PC-3 (cell line): ENCODE measurements at regions of chr17 and their contacts with region 1.

Region 1: GRCh38 chr17:20935740-20936139 is 107.1 kb downstream of the USP22 start:
- DNase-seq: peak; percentile 84
- ATAC-seq: peak; percentile 80
- H3K4me3 ChIP-seq: peak overlapping the region; percentile 36; the same call in 1 of the 2 replicates
- H3K27ac ChIP-seq: peak overlapping the region; percentile 87
- H3K4me1 ChIP-seq: peaks cover 33% of the 10 kb centered on the region
- H3K27me3 ChIP-seq: no peaks in the 10 kb centered on the region
- CTCF ChIP-seq: no peak

Region 2: GRCh38 chr17:20908373-20909273 is 27.1 kb before region 1 on chr17:
- CTCF ChIA-PET with region 1: no interaction called
- POLR2A ChIA-PET with region 1: no interaction called
- intact Hi-C with region 1: loop called (anchors 2 kb)
- DNase-seq: peak; percentile 89
- ATAC-seq: peak; percentile 99
- H3K4me3 ChIP-seq: peak overlapping the region; percentile 62
- H3K27ac ChIP-seq: peak overlapping the region; percentile 70
- H3K4me1 ChIP-seq: peaks cover 13% of the 10 kb centered on the region
- H3K27me3 ChIP-seq: no peaks in the 10 kb centered on the region
- CTCF ChIP-seq: peak; percentile 75